Naive thymus-derived CD4-positive, alpha-beta T cell (primary cell): ENCODE measurements at regions of chr10 and their contacts with region 1.

Region 1: DNA sequence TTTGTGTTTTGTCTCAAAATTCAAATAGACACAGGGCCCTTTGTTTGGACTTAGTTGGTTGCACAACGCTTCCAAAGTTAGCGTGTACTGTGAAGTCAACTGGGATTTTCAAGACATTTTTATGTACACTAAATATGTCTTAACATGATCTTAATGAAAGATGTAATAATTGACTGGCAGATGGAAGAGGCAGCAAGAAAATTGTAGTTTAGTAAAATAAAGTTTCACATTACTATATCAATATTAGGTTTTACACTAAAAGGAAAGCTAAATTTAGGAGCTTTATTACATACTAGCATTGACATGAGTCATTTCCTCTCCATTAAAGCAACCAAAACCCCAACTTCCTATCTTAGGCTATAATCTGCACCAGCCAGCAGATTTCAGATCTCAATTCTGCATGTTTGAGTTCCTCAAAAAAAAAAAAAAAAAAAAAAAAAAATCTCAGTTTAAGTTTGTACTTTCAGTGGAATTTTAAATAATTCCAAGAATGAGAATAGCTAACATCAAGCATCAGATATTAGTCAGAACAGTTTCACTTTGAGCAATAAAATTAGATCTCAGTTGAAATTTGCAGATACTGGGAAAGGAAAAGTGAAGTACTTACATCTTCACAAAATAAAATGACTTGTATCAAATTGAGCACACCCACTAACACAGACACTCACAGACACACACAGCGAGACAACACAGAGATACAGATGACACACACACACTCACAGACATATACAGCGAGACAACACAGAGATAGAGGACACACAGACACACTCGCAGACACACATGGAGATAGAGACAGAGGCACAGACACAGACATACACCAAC is 346.6 kb upstream of the KLF6 start:
- DNase-seq: peak in 7 of 9 donors; percentile 31 to 65 (median 58)
- ATAC-seq: peak; percentile 90
- H3K4me3 ChIP-seq: peak overlapping the region; percentile 29
- H3K4me3 Mint-ChIP-seq: no peak overlapping the region
- H3K27ac ChIP-seq: no peak overlapping the region
- H3K27ac Mint-ChIP-seq: no peak overlapping the region
- H3K4me1 ChIP-seq: peaks cover 22 to 33% of the 10 kb centered on the region in 2 donors
- H3K4me1 Mint-ChIP-seq: peaks cover under 1 to 34% (median 8%) of the 10 kb centered on the region in 7 donors
- H3K27me3 ChIP-seq: no peaks in the 10 kb centered on the region
- H3K27me3 Mint-ChIP-seq: no peaks in the 10 kb centered on the region

Region 2: GRCh38 chr10:3452173-3452626 is 679.4 kb before region 1 on chr10:
- CTCF ChIA-PET with region 1: no interaction called
- POLR2A ChIA-PET with region 1: no interaction called
- intact Hi-C with region 1: loop called in 1 of 2 experiments (anchors 10 kb)
- DNase-seq: peak in 6 of 9 donors; percentile 18 to 56 (median 24)
- ATAC-seq: no peak
- H3K4me3 ChIP-seq: no peak overlapping the region
- H3K4me3 Mint-ChIP-seq: peak overlapping the region in 1 of 10 donors; percentile 57
- H3K27ac ChIP-seq: peak overlapping the region; percentile 51
- H3K27ac Mint-ChIP-seq: peak overlapping the region in 8 of 9 donors; percentile 16 to 88 (median 78)
- H3K4me1 ChIP-seq: peaks cover 0 to 38% of the 10 kb centered on the region in 2 donors
- H3K4me1 Mint-ChIP-seq: peaks cover 7 to 48% (median 36%) of the 10 kb centered on the region in 7 donors
- H3K27me3 ChIP-seq: peaks cover 0 to 6% of the 10 kb centered on the region in 2 donors
- H3K27me3 Mint-ChIP-seq: peaks cover 0 to 32% (median 0%) of the 10 kb centered on the region in 5 donors

Region 3: GRCh38 chr10:3757638-3758490 is 373.8 kb before region 1 on chr10:
- CTCF ChIA-PET with region 1: no interaction called
- POLR2A ChIA-PET with region 1: no interaction called
- intact Hi-C with region 1: loop called in 1 of 2 experiments (anchors 1 kb)
- DNase-seq: peak in 1 of 9 donors; percentile 62
- ATAC-seq: peak; percentile 80
- H3K4me3 ChIP-seq: no peak overlapping the region
- H3K4me3 Mint-ChIP-seq: peak overlapping the region in 2 of 10 donors; percentile 56 to 82
- H3K27ac ChIP-seq: no peak overlapping the region
- H3K27ac Mint-ChIP-seq: peak overlapping the region in 4 of 9 donors; percentile 65 to 99 (median 83)
- H3K4me1 ChIP-seq: peaks cover 0 to 56% of the 10 kb centered on the region in 2 donors
- H3K4me1 Mint-ChIP-seq: peaks cover 5 to 79% (median 24%) of the 10 kb centered on the region in 7 donors
- H3K27me3 ChIP-seq: no peaks in the 10 kb centered on the region
- H3K27me3 Mint-ChIP-seq: no peaks in the 10 kb centered on the region

Region 4: GRCh38 chr10:3805791-3806461 is 325.7 kb before region 1 on chr10:
- CTCF ChIA-PET with region 1: no interaction called
- POLR2A ChIA-PET with region 1: no interaction called
- intact Hi-C with region 1: loop called in 1 of 2 experiments (anchors 1 kb)
- DNase-seq: peak in 3 of 9 donors; percentile 13 to 53 (median 31)
- ATAC-seq: no peak
- H3K4me3 ChIP-seq: peak overlapping the region; percentile 38
- H3K4me3 Mint-ChIP-seq: peak overlapping the region; percentile 14 to 86 (median 70)
- H3K27ac ChIP-seq: peak overlapping the region; percentile 82
- H3K27ac Mint-ChIP-seq: peak overlapping the region in 3 of 9 donors; percentile 97 to 99 (median 99)
- H3K4me1 ChIP-seq: peaks cover 70 to 83% of the 10 kb centered on the region in 2 donors
- H3K4me1 Mint-ChIP-seq: peaks cover 43 to 81% (median 74%) of the 10 kb centered on the region in 7 donors
- H3K27me3 ChIP-seq: no peaks in the 10 kb centered on the region
- H3K27me3 Mint-ChIP-seq: no peaks in the 10 kb centered on the region

Region 5: DNA sequence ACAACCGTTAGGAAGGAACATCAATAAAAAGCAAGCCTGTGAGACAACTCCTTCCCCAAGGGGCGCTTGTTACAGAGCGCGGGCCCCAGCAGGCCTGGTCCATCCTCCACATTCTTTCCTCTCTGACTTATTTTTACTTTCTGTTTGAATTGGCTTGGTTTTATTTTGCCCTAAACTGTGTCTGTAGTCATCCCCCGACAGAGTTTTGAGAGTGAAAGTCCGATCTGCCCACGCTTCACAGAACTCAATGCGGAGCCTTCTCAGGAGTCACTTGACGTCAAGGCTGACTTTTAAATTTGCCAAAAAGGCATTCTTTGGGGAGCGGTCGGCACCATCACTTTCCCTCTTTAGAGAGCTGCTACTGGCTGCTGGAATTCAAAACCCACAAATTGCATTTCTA is 196.5 kb before region 1 on chr10:
- CTCF ChIA-PET with region 1: no interaction called
- POLR2A ChIA-PET with region 1: no interaction called
- intact Hi-C with region 1: loop called in 1 of 2 experiments (anchors 1 kb)
- DNase-seq: peak in 6 of 9 donors; percentile 4 to 73 (median 22)
- ATAC-seq: peak; percentile 84
- H3K4me3 ChIP-seq: peak overlapping the region; percentile 32
- H3K4me3 Mint-ChIP-seq: peak overlapping the region; percentile 43 to 83 (median 78)
- H3K27ac ChIP-seq: peak overlapping the region; percentile 43
- H3K27ac Mint-ChIP-seq: peak overlapping the region; percentile 67 to 95 (median 86)
- H3K4me1 ChIP-seq: peaks cover 0 to 5% of the 10 kb centered on the region in 2 donors
- H3K4me1 Mint-ChIP-seq: peaks cover 11 to 61% (median 17%) of the 10 kb centered on the region in 7 donors
- H3K27me3 ChIP-seq: no peaks in the 10 kb centered on the region
- H3K27me3 Mint-ChIP-seq: no peaks in the 10 kb centered on the region

Region 6: DNA sequence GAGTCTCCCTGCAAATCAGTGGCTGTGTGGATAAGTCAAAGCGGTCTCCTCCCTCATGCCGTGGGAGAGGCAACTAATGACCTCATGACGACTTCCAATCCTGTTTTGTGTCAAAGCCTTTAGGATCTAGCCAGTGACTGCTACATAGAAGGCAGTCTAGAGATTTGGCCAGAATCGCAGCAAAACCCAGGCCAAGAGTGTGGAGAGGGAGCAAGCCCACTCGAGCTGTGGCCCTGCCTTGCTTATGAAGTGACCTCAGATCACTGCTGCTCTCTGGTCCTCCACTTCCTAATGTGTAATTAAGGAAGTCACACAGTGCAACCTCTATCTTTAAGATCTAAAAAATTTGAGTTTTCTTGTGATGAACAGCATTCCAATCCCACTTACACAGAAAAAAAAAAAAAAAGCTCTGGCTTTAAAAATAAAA is 49.9 kb before region 1 on chr10:
- CTCF ChIA-PET with region 1: interaction called, 4 read pairs
- POLR2A ChIA-PET with region 1: no interaction called
- intact Hi-C with region 1: loop called in 1 of 2 experiments (anchors 1 kb)
- DNase-seq: no peak
- ATAC-seq: no peak
- H3K4me3 ChIP-seq: no peak overlapping the region
- H3K4me3 Mint-ChIP-seq: peak overlapping the region in 2 of 10 donors; percentile 1 to 3
- H3K27ac ChIP-seq: no peak overlapping the region
- H3K27ac Mint-ChIP-seq: peak overlapping the region in 7 of 9 donors; percentile 14 to 75 (median 52)
- H3K4me1 ChIP-seq: peaks cover 15 to 39% of the 10 kb centered on the region in 2 donors
- H3K4me1 Mint-ChIP-seq: peaks cover 21 to 47% (median 29%) of the 10 kb centered on the region in 7 donors
- H3K27me3 ChIP-seq: no peaks in the 10 kb centered on the region
- H3K27me3 Mint-ChIP-seq: no peaks in the 10 kb centered on the region

Region 7: GRCh38 chr10:4174197-4174596 is 42.6 kb after region 1 on chr10:
- CTCF ChIA-PET with region 1: no interaction called
- POLR2A ChIA-PET with region 1: no interaction called
- intact Hi-C with region 1: no loop called
- DNase-seq: no peak
- ATAC-seq: no peak
- H3K4me3 ChIP-seq: no peak overlapping the region
- H3K4me3 Mint-ChIP-seq: no peak overlapping the region
- H3K27ac ChIP-seq: no peak overlapping the region
- H3K27ac Mint-ChIP-seq: no peak overlapping the region
- H3K4me1 ChIP-seq: no peaks in the 10 kb centered on the region
- H3K4me1 Mint-ChIP-seq: peaks cover 0 to 4% (median 0%) of the 10 kb centered on the region in 7 donors
- H3K27me3 ChIP-seq: no peaks in the 10 kb centered on the region
- H3K27me3 Mint-ChIP-seq: peaks cover 0 to 4% (median 0%) of the 10 kb centered on the region in 5 donors